Dendritic cell treated with granulocyte-macrophage colony-stimulating factor and Interleukin-4, amounts not matched to agents 40 ng/mL and 50 ng/mL, for 4 days (primary cell): ENCODE measurements at regions of chr12 and their contacts with region 1.

Region 1: GRCh38 chr12:114662512-114663177 is 21.3 kb downstream of the TBX3 start:
- H3K4me3 Mint-ChIP-seq: no peak overlapping the region
- H3K27ac Mint-ChIP-seq: no peak overlapping the region
- H3K4me1 Mint-ChIP-seq: peaks cover under 1% of the 10 kb centered on the region
- H3K27me3 Mint-ChIP-seq: peaks cover 55% of the 10 kb centered on the region

Region 2: GRCh38 chr12:114904254-114905003 is 241.8 kb after region 1 on chr12:
- intact Hi-C with region 1: no loop called
- H3K4me3 Mint-ChIP-seq: no peak overlapping the region
- H3K27ac Mint-ChIP-seq: no peak overlapping the region
- H3K4me1 Mint-ChIP-seq: no peaks in the 10 kb centered on the region
- H3K27me3 Mint-ChIP-seq: no peaks in the 10 kb centered on the region

Region 3: DNA sequence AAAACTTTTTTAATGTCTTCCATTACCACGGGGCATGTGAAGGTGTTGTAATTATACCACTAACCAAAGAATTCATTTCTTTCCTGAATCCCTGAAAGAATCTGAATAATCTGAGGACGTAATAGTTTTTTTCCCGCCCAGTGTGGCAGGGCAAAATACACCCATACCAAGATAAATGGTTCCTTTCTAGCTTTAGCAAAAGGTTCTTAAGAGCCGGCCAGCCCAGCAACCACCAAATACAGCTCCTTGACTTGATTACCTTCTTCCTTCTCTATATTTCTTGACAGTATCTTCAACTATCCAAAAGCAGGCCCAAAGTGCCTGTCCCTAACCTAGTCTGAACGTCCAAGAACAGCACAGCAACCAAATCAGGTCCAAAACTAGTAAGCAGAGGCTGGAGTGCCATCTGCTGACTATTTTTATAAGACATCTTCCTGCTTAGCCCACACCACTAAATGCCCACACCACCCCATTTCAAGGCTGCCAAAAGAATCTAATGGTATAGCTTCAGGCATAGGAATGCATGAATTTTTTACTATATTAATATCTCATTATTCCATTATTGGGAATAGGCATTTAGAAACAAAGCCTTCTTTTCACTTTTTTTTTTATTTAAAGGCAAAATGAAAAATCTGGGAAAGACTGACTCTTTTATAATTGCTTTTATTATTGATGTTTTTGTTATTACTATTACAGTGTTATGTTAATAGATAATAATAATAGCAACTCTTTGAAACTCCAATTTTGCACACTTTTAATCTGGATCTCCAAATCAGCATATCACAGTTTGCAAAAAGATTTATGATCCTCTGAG is 1090.5 kb after region 1 on chr12:
- intact Hi-C with region 1: loop called (anchors 1 kb)
- H3K4me3 Mint-ChIP-seq: no peak overlapping the region
- H3K27ac Mint-ChIP-seq: no peak overlapping the region
- H3K4me1 Mint-ChIP-seq: no peaks in the 10 kb centered on the region
- H3K27me3 Mint-ChIP-seq: peaks cover 10% of the 10 kb centered on the region